ENCODE measurements at regions of chr4 and their contacts with region 1.

Region 1: GRCh38 chr4:40228497-40229365 is 31.9 kb downstream of the RHOH start:
- DNase-seq: no peak
- H3K4me3 Mint-ChIP-seq: peak overlapping the region; percentile 71
- H3K27ac Mint-ChIP-seq: peak overlapping the region; percentile 96
- H3K4me1 Mint-ChIP-seq: peaks cover 77% of the 10 kb centered on the region
- H3K27me3 Mint-ChIP-seq: no peaks in the 10 kb centered on the region

Region 2: DNA sequence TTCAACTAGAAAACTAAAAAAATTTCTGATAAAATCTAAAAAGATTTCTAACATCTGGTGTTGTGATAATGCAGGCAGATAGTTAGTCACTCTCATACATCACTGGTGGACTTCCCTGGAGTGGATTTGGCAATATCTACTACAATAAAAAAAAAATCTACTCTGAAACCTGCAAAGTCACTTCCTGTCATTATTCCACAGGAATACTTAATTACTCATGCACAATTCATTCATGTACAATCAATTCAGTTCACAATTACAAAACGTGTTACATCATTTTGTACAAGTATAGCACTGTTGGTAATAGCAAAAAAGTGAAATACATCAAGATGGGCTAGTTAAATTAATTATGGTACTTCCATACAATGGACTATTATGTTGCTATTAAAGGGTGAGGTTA is 48.4 kb before region 1 on chr4:
- intact Hi-C with region 1: no loop called
- DNase-seq: no peak
- H3K4me3 Mint-ChIP-seq: no peak overlapping the region
- H3K27ac Mint-ChIP-seq: no peak overlapping the region
- H3K4me1 Mint-ChIP-seq: peaks cover 29% of the 10 kb centered on the region
- H3K27me3 Mint-ChIP-seq: no peaks in the 10 kb centered on the region

Region 3: GRCh38 chr4:40193016-40193571 is 35.6 kb before region 1 on chr4:
- intact Hi-C with region 1: loop called (anchors 5 kb)
- DNase-seq: peak; percentile 57
- H3K4me3 Mint-ChIP-seq: peak overlapping the region; percentile 79
- H3K27ac Mint-ChIP-seq: peak overlapping the region; percentile 94
- H3K4me1 Mint-ChIP-seq: peaks cover 68% of the 10 kb centered on the region
- H3K27me3 Mint-ChIP-seq: no peaks in the 10 kb centered on the region

Region 4: DNA sequence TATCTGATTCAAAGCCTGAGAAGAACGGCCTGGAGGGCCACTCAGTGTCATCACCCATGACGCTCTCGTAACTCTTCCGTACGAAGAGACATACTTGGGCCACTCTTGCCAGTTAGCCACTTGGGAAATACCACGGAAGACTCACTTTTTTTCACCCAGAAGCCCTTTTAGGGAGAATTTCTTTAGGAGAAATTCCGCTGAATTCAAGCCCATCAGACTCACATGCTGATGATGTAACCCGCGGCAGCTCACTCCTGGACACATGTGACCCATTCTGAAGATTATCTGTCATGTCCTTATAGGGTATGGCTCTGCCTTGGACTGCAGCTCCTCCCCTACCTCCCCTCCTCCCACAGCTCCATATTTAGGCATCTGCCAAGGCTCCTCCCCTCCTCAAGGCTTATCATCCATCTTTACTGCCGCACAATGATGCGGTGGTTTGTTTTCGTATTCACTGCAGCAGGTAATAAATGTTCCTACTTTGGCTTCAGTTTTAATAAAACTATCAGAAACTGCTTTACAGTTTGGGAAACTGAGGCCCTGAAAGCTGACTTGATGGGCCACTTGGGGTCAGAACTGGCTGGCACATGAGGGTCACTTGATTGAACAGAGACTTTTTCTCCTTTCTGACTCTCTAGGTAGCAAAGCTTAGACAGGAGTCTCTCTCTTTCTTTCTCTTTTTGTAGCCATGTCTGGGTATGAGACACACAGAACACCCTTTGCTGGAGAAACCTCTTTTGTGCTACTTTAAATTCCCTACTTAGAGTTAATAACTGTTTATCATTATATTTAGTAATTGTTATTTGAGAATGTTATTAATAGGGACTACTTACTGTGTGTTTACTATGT is 10.2 kb after region 1 on chr4:
- intact Hi-C with region 1: loop called (anchors 1 kb)
- DNase-seq: peak; percentile 79
- H3K4me3 Mint-ChIP-seq: peak overlapping the region; percentile 77
- H3K27ac Mint-ChIP-seq: peak overlapping the region; percentile 94
- H3K4me1 Mint-ChIP-seq: peaks cover 74% of the 10 kb centered on the region
- H3K27me3 Mint-ChIP-seq: no peaks in the 10 kb centered on the region

Region 5: DNA sequence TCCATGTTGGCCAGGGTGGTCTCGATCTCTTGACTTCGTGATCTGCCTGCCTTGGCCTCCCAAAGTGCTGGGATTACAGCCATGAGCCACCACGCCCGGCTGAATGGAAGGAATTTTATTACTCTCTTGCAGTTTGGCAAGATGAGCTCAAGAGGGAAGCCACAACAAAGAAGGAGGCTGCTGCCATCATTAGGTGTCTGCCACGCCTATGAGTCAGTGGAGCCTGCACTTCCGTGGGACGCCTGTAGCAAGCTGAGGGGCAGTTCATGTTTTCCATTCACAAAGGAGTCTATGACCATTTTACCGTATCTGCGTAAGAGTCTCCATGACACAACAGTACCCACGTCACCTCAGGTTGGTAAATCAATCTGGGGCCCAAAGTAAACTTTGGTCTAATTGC is 55.2 kb after region 1 on chr4:
- intact Hi-C with region 1: loop called (anchors 1 kb)
- DNase-seq: peak; percentile 70
- H3K4me3 Mint-ChIP-seq: peak overlapping the region; percentile 45
- H3K27ac Mint-ChIP-seq: peak overlapping the region; percentile 96
- H3K4me1 Mint-ChIP-seq: peaks cover 47% of the 10 kb centered on the region
- H3K27me3 Mint-ChIP-seq: no peaks in the 10 kb centered on the region

Region 6: GRCh38 chr4:40316782-40317635 is 88.3 kb after region 1 on chr4:
- intact Hi-C with region 1: loop called (anchors 1 kb)
- DNase-seq: peak; percentile 64
- H3K4me3 Mint-ChIP-seq: peak overlapping the region; percentile 83
- H3K27ac Mint-ChIP-seq: peak overlapping the region; percentile 99
- H3K4me1 Mint-ChIP-seq: peaks cover 46% of the 10 kb centered on the region
- H3K27me3 Mint-ChIP-seq: no peaks in the 10 kb centered on the region

Region 7: GRCh38 chr4:40699648-40700047 is 470.9 kb after region 1 on chr4:
- intact Hi-C with region 1: loop called (anchors 5 kb)
- DNase-seq: no peak
- H3K4me3 Mint-ChIP-seq: peak overlapping the region; percentile 2
- H3K27ac Mint-ChIP-seq: peak overlapping the region; percentile 74
- H3K4me1 Mint-ChIP-seq: peaks cover 37% of the 10 kb centered on the region
- H3K27me3 Mint-ChIP-seq: no peaks in the 10 kb centered on the region